Left cardiac atrium (tissue), 4 donors: ENCODE measurements at regions of chr17 and their contacts with region 1.

Region 1: GRCh38 chr17:31524926-31525800 is 133.7 kb downstream of the RAB11FIP4 start:
- DNase-seq: peak; percentile 88
- ATAC-seq: peak; percentile 82 to 89

Region 2: GRCh38 chr17:31388770-31389661 is 136.1 kb before region 1 on chr17:
- intact Hi-C with region 1: loop called in 1 of 2 experiments (anchors 5 kb)
- DNase-seq: no peak
- ATAC-seq: peak; percentile 23 to 39

Region 3: DNA sequence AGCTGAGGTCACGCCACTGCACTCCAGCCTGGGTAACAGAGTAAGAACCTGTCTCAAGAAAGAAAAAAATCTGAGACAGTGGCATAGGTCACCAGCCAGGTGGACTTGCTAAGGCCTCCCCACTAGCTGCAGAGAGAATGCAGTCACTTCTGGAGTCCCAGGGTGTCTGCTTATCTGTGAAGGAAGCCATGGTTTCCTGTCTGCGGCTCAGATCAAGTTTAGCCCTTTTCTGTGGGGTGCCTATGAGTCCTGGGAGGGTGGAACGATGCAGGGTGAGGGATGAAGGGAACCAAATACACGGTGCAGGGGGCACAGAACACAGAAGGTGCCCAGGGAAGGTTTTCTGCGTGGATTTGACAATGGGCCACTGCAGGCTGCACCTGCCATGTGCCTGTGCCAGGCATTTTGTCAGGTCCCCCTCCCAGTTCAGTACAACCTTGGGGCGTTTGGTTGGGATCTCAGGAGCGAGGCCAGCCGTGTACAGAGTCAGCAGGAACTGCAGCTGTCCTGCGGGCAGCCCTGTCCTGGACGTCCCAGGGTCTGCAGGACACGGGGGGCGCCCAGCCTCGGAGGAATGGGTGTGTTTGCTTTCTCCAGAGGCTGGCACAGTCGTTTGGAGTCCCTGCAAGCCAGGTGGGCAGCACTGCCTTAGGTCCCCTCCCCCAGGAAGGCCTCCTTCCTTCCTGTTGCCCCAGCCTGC is 91.9 kb before region 1 on chr17:
- intact Hi-C with region 1: loop called (anchors 2 to 5 kb)
- DNase-seq: no peak
- ATAC-seq: no peak

Region 4: GRCh38 chr17:31487648-31488263 is 37.4 kb before region 1 on chr17:
- intact Hi-C with region 1: no loop called
- DNase-seq: peak; percentile 90
- ATAC-seq: peak; percentile 90 to 92

Region 5: DNA sequence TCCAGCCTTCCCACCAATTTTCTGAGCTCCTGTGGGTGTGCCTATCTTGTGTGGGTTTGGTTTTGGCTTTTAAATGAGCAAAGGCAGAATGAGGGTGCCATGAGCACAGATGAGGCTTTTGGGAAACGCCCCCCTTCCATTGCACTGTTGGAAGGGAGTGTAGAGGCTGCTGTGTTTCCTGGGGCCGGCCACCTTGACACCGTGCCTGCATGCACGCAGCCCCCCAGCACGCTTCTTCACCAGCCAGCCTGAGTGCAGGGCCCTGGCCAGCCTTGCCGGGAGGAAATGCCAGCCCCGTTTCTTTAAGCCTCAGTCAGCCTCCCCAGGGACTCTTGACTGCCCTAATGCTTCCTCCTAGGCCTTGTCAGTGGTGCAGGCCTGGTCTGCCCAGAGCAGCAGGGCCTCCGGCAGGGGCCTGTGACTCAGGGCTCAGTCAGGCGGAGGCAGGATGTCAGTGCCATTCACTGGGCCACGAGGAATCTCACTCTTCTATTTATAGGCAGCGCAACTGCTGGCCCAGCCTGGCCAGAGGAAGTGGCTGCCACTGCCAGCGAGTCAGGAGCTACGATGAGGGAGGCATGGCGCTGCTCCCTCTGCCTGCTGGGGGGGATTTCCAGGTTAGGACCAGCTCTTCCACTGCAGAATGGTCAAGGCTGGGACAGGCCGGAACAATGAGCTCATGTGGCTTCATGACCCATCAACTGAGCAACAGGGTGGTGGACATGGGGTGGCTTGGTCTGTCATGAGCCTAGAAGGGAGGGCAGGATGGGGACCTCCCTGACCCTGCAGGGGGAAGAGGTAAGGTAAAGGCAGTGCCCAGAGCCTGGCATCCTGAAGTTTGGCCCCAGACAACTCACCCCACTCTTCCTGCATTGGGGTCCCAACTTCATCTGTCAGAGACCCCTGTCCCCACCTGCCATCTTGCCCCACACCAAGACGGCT is 71.5 kb after region 1 on chr17:
- intact Hi-C with region 1: no loop called
- DNase-seq: peak; percentile 76
- ATAC-seq: peak; percentile 92 to 97